OCI-LY7 (cell line): ENCODE measurements at regions of chr3 and their contacts with region 1.

Region 1: DNA sequence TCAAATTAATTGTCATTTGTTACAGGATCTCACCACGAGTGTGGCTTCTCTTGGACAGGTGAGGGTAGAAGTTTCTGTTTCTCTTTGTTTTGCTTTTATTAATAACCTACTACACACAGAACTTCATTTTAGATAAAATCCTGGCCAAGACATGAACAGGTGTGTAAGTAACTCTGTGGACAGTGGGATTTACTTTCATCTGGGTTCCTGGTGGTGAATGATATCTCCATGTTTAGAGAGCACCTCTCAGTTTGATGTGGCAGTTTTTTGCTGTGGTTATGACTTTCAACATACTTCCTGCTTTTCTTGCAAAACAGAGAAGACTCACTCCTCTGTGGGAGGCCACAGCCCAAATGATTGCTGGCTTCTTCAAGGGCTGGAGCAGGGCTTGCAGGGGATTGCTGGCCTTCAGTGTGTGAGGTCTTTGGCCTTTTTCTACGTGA is 71.1 kb upstream of the XCR1 start:
- DNase-seq: peak; percentile 68
- H3K4me3 ChIP-seq: peak overlapping the region; percentile 10
- H3K27ac ChIP-seq: peak overlapping the region; percentile 64
- H3K4me1 ChIP-seq: peaks cover 60% of the 10 kb centered on the region
- CTCF ChIP-seq: no peak

Region 2: GRCh38 chr3:45546716-45547701 is 551.3 kb before region 1 on chr3:
- CTCF ChIA-PET with region 1: no interaction called
- POLR2A ChIA-PET with region 1: no interaction called
- intact Hi-C with region 1: no loop called
- DNase-seq: peak; percentile 39
- H3K4me3 ChIP-seq: no peak overlapping the region
- H3K27ac ChIP-seq: no peak overlapping the region
- H3K4me1 ChIP-seq: peaks cover 2% of the 10 kb centered on the region
- CTCF ChIP-seq: peak; percentile 86

Region 3: GRCh38 chr3:46135475-46135874 is 37.1 kb after region 1 on chr3:
- CTCF ChIA-PET with region 1: no interaction called
- POLR2A ChIA-PET with region 1: no interaction called
- intact Hi-C with region 1: no loop called
- DNase-seq: no peak
- H3K4me3 ChIP-seq: no peak overlapping the region
- H3K27ac ChIP-seq: no peak overlapping the region
- H3K4me1 ChIP-seq: no peaks in the 10 kb centered on the region
- CTCF ChIP-seq: no peak

Region 4: GRCh38 chr3:46186471-46187340 is 88.4 kb after region 1 on chr3:
- CTCF ChIA-PET with region 1: no interaction called
- POLR2A ChIA-PET with region 1: no interaction called
- intact Hi-C with region 1: loop called (anchors 5 kb)
- DNase-seq: peak; percentile 67
- H3K4me3 ChIP-seq: no peak overlapping the region
- H3K27ac ChIP-seq: no peak overlapping the region
- H3K4me1 ChIP-seq: peaks cover 11% of the 10 kb centered on the region
- CTCF ChIP-seq: no peak